ENCODE measurements at regions of chr17 and their contacts with region 1.

Region 1: GRCh38 chr17:82292251-82293154 is 19.0 kb upstream of the CSNK1D start:
- DNase-seq: peak; percentile 98
- H3K4me3 ChIP-seq: peak overlapping the region; percentile 83 to 84
- H3K27ac ChIP-seq: peak overlapping the region; percentile 97 to 99
- H3K4me1 ChIP-seq: peaks cover 21% of the 10 kb centered on the region
- H3K27me3 ChIP-seq: no peaks in the 10 kb centered on the region
- CTCF ChIP-seq: no peak
- POLR2A ChIP-seq: peak; percentile 91

Region 2: GRCh38 chr17:82241183-82241925 is 51.1 kb before region 1 on chr17:
- intact Hi-C with region 1: loop called (anchors 10 kb)
- DNase-seq: no peak
- H3K4me3 ChIP-seq: no peak overlapping the region
- H3K27ac ChIP-seq: peak overlapping the region; percentile 78 to 86
- H3K4me1 ChIP-seq: peaks cover 78% of the 10 kb centered on the region
- H3K27me3 ChIP-seq: no peaks in the 10 kb centered on the region
- CTCF ChIP-seq: no peak
- POLR2A ChIP-seq: no peak

Measured in testis (tissue), 5 donors.